Activated CD4-positive, alpha-beta T cell treated with anti-CD3 and anti-CD28 coated beads for 36 hours (primary cell): ENCODE measurements at regions of chr22 and their contacts with region 1.

Region 1: GRCh38 chr22:42780070-42780540 is 59.4 kb upstream of the A4GALT start:
- DNase-seq: peak; percentile 58
- ATAC-seq: peak; percentile 73
- H3K4me3 Mint-ChIP-seq: no peak overlapping the region
- H3K27ac Mint-ChIP-seq: no peak overlapping the region
- H3K4me1 Mint-ChIP-seq: no peaks in the 10 kb centered on the region
- H3K27me3 Mint-ChIP-seq: no peaks in the 10 kb centered on the region

Region 2: GRCh38 chr22:42820066-42820763 is 40.1 kb after region 1 on chr22:
- CTCF ChIA-PET with region 1: interaction called, 3 read pairs
- POLR2A ChIA-PET with region 1: no interaction called
- intact Hi-C with region 1: loop called in 1 of 2 experiments (anchors 1 kb)
- DNase-seq: no peak
- ATAC-seq: no peak
- H3K4me3 Mint-ChIP-seq: no peak overlapping the region
- H3K27ac Mint-ChIP-seq: no peak overlapping the region
- H3K4me1 Mint-ChIP-seq: peaks cover 5% of the 10 kb centered on the region
- H3K27me3 Mint-ChIP-seq: no peaks in the 10 kb centered on the region

Region 3: DNA sequence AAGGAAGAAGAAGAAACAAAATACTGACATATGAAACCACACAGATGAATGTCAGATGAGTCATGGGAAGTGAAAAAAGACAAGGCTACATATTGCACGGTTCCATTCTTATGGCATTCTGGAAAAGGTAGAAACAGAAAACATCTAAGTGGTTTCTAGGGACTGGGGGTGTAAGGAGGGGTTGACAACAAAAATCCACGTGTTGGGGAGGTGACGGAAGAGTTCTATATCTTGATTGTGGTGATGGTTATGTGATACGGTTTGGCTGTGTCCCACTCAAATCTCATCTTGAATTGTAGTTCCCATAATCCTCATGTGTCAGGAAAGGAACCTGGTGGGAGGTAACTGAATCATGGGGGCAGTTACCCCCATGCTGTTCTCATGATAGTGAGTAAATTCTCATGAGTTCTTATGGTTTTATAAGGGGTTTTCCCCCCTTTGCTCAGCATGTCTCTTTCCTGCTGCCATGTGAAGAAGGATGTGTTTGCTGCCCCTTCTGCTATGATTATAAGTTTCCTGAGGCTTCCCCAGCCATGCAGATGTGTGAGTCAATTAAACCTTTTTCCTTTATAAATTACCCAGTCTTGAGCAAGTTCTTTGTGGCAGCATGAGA is 83.3 kb after region 1 on chr22:
- CTCF ChIA-PET with region 1: interaction called, 5 read pairs
- POLR2A ChIA-PET with region 1: no interaction called
- intact Hi-C with region 1: loop called in 1 of 2 experiments (anchors 1 kb)
- DNase-seq: peak; percentile 76
- ATAC-seq: peak; percentile 78
- H3K4me3 Mint-ChIP-seq: no peak overlapping the region
- H3K27ac Mint-ChIP-seq: peak overlapping the region; percentile 75
- H3K4me1 Mint-ChIP-seq: peaks cover 19% of the 10 kb centered on the region
- H3K27me3 Mint-ChIP-seq: peaks cover 6% of the 10 kb centered on the region

Region 4: GRCh38 chr22:43036282-43036829 is 256.3 kb after region 1 on chr22:
- CTCF ChIA-PET with region 1: no interaction called
- POLR2A ChIA-PET with region 1: no interaction called
- intact Hi-C with region 1: loop called (anchors 1 to 5 kb)
- DNase-seq: no peak
- ATAC-seq: no peak
- H3K4me3 Mint-ChIP-seq: no peak overlapping the region
- H3K27ac Mint-ChIP-seq: no peak overlapping the region
- H3K4me1 Mint-ChIP-seq: peaks cover 4% of the 10 kb centered on the region
- H3K27me3 Mint-ChIP-seq: no peaks in the 10 kb centered on the region

Region 5: GRCh38 chr22:43060183-43060582 is 280.1 kb after region 1 on chr22:
- CTCF ChIA-PET with region 1: interaction called, 6 read pairs
- POLR2A ChIA-PET with region 1: no interaction called
- intact Hi-C with region 1: loop called in 1 of 2 experiments (anchors 1 kb)
- DNase-seq: peak; percentile 77
- ATAC-seq: peak; percentile 70
- H3K4me3 Mint-ChIP-seq: no peak overlapping the region
- H3K27ac Mint-ChIP-seq: no peak overlapping the region
- H3K4me1 Mint-ChIP-seq: no peaks in the 10 kb centered on the region
- H3K27me3 Mint-ChIP-seq: no peaks in the 10 kb centered on the region

Region 6: GRCh38 chr22:43100211-43100610 is 320.1 kb after region 1 on chr22:
- CTCF ChIA-PET with region 1: no interaction called
- POLR2A ChIA-PET with region 1: no interaction called
- intact Hi-C with region 1: no loop called
- DNase-seq: no peak
- ATAC-seq: peak; percentile 74
- H3K4me3 Mint-ChIP-seq: no peak overlapping the region
- H3K27ac Mint-ChIP-seq: no peak overlapping the region
- H3K4me1 Mint-ChIP-seq: peaks cover 16% of the 10 kb centered on the region
- H3K27me3 Mint-ChIP-seq: no peaks in the 10 kb centered on the region